H1 (cell line): ENCODE measurements at regions of chr2 and their contacts with region 1.

Region 1: DNA sequence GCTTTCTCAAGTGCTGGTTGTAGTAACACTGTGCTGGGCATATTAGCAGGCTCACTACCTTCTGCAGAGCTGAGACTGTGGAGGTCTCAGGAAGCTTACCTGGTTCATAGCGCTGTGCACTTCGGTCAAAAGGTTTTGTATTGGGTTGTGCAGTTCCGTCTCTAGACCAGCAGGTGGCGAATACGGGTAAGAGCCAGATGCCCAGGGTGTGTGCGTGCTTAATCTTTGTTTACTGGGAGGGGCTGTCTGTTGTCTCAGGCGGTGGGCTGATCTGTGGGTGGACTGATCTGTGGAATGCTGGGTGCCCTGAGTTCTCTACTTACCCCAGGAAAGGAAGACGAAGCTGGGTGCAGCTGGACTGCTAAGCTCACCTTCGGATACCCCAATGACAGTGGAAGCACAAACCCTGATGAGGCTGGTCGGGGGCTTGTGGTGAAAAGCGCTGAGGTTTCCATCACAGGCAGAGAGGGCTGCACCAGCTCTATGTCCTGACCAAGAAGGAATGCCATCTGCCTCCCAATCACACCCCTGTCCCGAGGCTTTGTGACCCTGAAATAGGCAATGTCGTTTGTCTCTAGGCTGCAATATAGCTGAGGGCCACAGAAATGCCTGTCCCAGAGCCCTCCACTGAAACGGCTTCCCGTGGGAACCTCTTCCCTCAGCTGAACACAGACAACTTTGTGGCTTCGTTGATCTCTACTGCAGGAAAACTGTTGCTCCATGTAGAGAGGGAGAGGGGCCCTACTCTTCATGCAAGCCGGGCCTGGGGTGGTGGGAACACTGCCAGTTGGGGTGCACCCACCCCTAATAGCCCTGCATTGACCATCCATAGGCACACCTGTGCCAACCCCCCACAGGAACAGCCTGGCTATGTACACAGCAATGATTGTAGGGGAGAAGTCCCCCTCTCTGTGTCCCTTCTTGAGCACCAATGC is 45.9 kb upstream of the FAM117B start:
- DNase-seq: peak; percentile 41 to 66
- H3K4me3 ChIP-seq: no peak overlapping the region
- H3K27ac ChIP-seq: no peak overlapping the region
- H3K4me1 ChIP-seq: peaks cover 0 to 8% (median 4%) of the 10 kb centered on the region in 4 experiments; a peak in 4 of 7 replicates
- H3K27me3 ChIP-seq: no peaks in the 10 kb centered on the region
- CTCF ChIP-seq: peak; percentile 78 to 97 (median 89)
- EP300 ChIP-seq: no peak
- POLR2A ChIP-seq: no peak
- RAD21 ChIP-seq: peak; percentile 84 to 88

Region 2: DNA sequence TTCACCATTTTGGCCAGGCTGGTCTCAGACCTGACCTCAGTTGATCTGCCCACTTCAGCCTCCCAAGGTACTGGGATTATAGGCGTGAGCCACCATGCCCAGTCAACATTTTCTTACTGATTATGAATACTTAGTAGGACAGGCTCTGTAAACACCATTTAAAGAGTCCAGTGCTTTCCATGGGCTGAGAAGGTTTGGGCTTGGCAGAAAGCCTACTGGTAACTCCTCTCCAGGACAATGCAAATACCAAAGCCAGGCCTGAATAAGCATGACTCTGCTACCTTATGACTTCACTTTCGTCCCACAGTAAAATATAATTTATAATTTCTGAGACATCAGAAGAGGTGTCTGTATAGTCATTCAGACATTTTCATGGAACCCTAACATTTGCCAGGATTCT is 14.4 kb before region 1 on chr2:
- CTCF ChIA-PET with region 1: interaction called, 21 read pairs
- POLR2A ChIA-PET with region 1: no interaction called
- DNase-seq: no peak
- H3K4me3 ChIP-seq: no peak overlapping the region
- H3K27ac ChIP-seq: no peak overlapping the region
- H3K4me1 ChIP-seq: no peaks in the 10 kb centered on the region
- H3K27me3 ChIP-seq: no peaks in the 10 kb centered on the region
- CTCF ChIP-seq: no peak
- EP300 ChIP-seq: no peak
- POLR2A ChIP-seq: no peak
- RAD21 ChIP-seq: no peak

Region 3: DNA sequence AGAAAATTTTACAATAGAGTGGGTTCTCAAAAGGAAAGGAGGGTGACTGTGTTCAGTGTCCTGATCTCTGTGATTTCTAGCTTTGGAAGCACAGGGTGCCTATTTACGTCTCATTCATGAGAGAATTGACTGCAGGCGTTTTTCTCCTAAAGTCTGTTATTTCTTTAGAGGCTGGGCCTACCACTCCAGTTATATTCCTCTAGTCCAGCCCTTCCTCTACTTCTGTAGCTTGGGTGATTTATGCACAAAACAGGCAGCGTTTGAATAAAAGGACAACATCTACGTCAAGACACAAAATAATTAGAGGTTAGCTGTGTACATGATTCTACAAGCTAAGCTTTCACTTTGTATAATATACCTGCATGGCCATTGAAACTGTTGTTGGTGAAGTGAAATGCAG is 13.4 kb after region 1 on chr2:
- CTCF ChIA-PET with region 1: interaction called, 27 read pairs
- POLR2A ChIA-PET with region 1: interaction called, 3 read pairs
- DNase-seq: no peak
- H3K4me3 ChIP-seq: no peak overlapping the region
- H3K27ac ChIP-seq: no peak overlapping the region
- H3K4me1 ChIP-seq: no peaks in the 10 kb centered on the region
- H3K27me3 ChIP-seq: no peaks in the 10 kb centered on the region
- CTCF ChIP-seq: no peak
- EP300 ChIP-seq: no peak
- POLR2A ChIP-seq: no peak
- RAD21 ChIP-seq: no peak

Region 4: DNA sequence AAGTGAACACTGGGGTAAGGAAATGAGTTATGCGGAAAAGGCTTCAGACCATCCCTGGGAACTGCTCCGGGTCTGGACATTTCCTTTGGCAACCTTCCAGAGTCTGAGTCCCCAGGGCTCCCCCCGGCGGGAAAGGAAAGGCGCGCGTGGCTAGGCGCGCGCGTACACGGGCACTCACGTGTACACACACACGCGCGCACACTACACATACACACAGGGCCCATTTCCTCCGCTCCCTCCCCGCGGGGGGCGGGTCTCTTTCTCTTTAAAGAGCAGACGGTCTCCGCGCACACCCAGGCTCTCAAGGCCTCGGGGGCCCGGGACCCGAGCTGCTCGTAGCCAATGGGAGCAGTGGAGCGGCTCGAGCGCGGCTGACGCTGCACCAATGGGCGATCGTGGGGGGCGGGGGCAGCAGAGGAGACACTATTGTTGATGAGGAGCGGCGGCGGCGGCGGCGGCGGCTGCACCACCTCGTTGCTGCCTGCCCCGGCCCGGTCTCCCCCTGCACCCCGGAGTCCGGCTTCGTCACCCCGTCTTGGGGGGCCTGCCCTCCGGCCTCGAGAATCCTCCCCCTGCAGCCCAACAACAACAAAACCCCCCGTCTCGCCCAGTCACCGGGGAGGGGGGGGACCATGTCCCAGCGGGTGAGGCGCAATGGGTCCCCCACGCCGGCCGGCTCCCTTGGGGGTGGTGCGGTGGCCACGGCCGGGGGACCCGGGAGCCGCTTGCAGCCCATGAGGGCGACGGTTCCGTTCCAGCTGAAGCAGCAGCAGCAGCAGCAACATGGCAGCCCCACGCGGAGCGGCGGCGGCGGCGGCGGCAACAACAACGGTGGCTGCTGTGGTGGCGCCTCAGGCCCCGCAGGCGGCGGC is 45.9 kb after region 1 on chr2 and contains the start of gene FAM117B:
- CTCF ChIA-PET with region 1: interaction called, 13 read pairs
- POLR2A ChIA-PET with region 1: interaction called, 4 read pairs
- DNase-seq: peak; percentile 90 to 95
- H3K4me3 ChIP-seq: peak within 1 kb of the TSS; percentile 68 to 87 (median 86)
- H3K27ac ChIP-seq: peak within 1 kb of the TSS; percentile 90
- H3K4me1 ChIP-seq: peaks cover 0 to 3% (median 0%) of the 10 kb centered on the region in 4 experiments; a peak in 2 of 7 replicates
- H3K27me3 ChIP-seq: no peaks in the 10 kb centered on the region; a peak in 1 of 7 replicates
- CTCF ChIP-seq: 0 out of 4 replicates have a peak, but pooled peaks of 1 of the 3 experiments have one; percentile 1
- EP300 ChIP-seq: no peak
- POLR2A ChIP-seq: peak; percentile 44 to 80
- RAD21 ChIP-seq: peak in 1 of 2 experiments; percentile 10; a peak in 1 of 4 replicates
- total RNA-seq, gene FAM117B: 21.4 and 22.6 TPM in 2 replicates

Region 5: GRCh38 chr2:202643012-202643858 is 54.3 kb after region 1 on chr2:
- CTCF ChIA-PET with region 1: interaction called, 10 read pairs
- POLR2A ChIA-PET with region 1: no interaction called
- DNase-seq: no peak
- H3K4me3 ChIP-seq: no peak overlapping the region
- H3K27ac ChIP-seq: no peak overlapping the region
- H3K4me1 ChIP-seq: peaks cover 0 to 4% (median 0%) of the 10 kb centered on the region in 4 experiments; a peak in 2 of 7 replicates
- H3K27me3 ChIP-seq: no peaks in the 10 kb centered on the region
- CTCF ChIP-seq: no peak
- EP300 ChIP-seq: no peak
- POLR2A ChIP-seq: no peak
- RAD21 ChIP-seq: no peak

Region 6: DNA sequence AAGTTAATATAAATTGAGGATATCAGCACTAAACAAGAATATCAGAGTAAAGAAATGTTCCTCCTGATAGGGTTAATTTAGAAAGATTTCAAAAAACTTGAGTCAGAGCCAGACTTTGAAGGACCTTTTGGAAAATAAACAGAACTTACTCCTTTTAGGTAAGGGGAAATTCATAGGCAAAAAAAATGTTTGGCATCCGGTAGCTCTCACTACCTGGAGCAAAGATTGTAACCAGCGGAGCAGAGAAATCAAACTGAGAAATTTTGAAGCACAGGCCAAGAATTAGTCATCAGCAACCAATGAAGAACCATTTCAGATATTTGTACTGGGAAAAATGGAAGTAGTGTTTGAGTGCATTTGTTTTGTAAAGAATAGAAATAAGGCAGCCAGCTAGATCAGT is 169.7 kb after region 1 on chr2:
- CTCF ChIA-PET with region 1: interaction called, 10 read pairs
- POLR2A ChIA-PET with region 1: no interaction called
- DNase-seq: no peak
- H3K4me3 ChIP-seq: no peak overlapping the region
- H3K27ac ChIP-seq: no peak overlapping the region
- H3K4me1 ChIP-seq: no peaks in the 10 kb centered on the region
- H3K27me3 ChIP-seq: no peaks in the 10 kb centered on the region
- CTCF ChIP-seq: no peak
- EP300 ChIP-seq: no peak
- POLR2A ChIP-seq: no peak
- RAD21 ChIP-seq: no peak